ENCODE measurements at regions of chr9 and their contacts with region 1.

Region 1: GRCh38 chr9:94166237-94166963 is 82.1 kb downstream of the PTPDC1 start:
- DNase-seq: peak; percentile 98
- H3K4me3 ChIP-seq: peak overlapping the region; percentile 68 to 98 (median 90)
- H3K27ac ChIP-seq: peak overlapping the region; percentile 96
- H3K4me1 ChIP-seq: peaks cover 13% of the 10 kb centered on the region
- H3K27me3 ChIP-seq: no peaks in the 10 kb centered on the region
- CTCF ChIP-seq: no peak

Region 2: GRCh38 chr9:94086486-94087345 is 79.7 kb before region 1 on chr9:
- CTCF ChIA-PET with region 1: no interaction called
- dilution Hi-C with region 1: no loop called
- in situ Hi-C with region 1: no loop called
- intact Hi-C with region 1: loop called (anchors 2 kb)
- DNase-seq: peak; percentile 76
- H3K4me3 ChIP-seq: no peak overlapping the region
- H3K27ac ChIP-seq: no peak overlapping the region
- H3K4me1 ChIP-seq: peaks cover 9% of the 10 kb centered on the region
- H3K27me3 ChIP-seq: no peaks in the 10 kb centered on the region
- CTCF ChIP-seq: no peak

Region 3: DNA sequence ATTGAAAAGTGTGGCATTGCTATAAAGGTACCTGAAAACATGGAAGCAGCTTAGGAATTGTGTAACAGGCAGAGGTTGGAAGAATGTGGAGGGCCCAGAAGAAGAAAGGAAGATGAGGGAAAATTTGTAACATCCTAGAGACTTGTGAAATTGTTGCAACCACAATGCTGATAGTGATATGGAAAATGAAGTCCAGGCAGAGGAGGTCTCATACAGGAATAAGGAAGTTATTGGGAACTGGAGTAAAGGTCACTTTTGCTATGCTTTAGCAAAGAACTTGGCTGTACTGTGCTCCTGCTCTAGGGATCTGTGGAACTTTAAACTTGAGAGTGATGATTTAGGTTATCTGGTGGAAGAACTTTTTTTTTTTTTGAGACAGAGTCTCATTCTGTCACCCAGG is 38.6 kb before region 1 on chr9:
- CTCF ChIA-PET with region 1: no interaction called
- dilution Hi-C with region 1: no loop called
- in situ Hi-C with region 1: no loop called
- intact Hi-C with region 1: no loop called
- DNase-seq: no peak
- H3K4me3 ChIP-seq: no peak overlapping the region
- H3K27ac ChIP-seq: no peak overlapping the region
- H3K4me1 ChIP-seq: no peaks in the 10 kb centered on the region
- H3K27me3 ChIP-seq: no peaks in the 10 kb centered on the region
- CTCF ChIP-seq: no peak

Region 4: DNA sequence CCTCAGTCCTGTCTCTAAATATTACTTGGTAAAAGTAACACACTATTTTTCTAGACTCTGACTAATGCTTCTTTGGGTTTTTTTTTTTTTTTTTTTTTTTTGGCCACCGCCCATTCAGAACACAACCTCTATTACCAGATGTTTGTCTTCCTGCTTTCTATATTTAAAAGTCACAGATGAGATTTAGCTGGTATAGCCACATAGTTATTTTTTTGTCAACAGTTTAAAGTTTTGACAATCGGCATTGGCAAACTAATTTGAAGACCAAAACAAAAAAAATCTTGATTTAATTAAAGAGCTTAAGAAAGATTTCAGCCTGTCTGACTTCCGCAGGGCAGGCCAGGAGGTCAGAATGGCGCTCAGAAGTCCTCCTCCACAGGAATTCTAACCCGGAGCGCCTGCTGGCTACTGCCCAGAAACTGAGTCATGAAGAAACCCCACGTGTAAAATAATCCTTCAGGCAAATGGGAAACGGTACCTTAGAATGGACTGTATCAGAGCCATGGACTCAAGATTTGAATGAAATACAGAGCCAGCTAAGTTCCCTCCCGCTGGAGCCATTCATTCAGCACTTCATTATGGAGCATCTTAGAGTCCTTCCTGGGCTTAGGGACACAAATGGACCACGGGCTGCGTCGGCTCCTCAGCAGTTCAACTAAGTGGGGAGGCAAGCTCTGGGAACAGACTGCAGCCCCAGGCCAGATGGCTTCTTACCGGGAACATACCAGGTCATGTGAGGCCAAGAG is 26.6 kb before region 1 on chr9:
- CTCF ChIA-PET with region 1: no interaction called
- dilution Hi-C with region 1: no loop called
- in situ Hi-C with region 1: no loop called
- intact Hi-C with region 1: loop called (anchors 1 kb)
- DNase-seq: peak; percentile 84
- H3K4me3 ChIP-seq: peak overlapping the region in 2 of 3 experiments; percentile 17 to 21
- H3K27ac ChIP-seq: peak overlapping the region; percentile 77
- H3K4me1 ChIP-seq: peaks cover 42% of the 10 kb centered on the region
- H3K27me3 ChIP-seq: no peaks in the 10 kb centered on the region
- CTCF ChIP-seq: no peak